Activated CD4-positive, alpha-beta memory T cell treated with anti-CD3 and anti-CD28 coated beads for 36 hours (primary cell): ENCODE measurements at regions of chr3 and their contacts with region 1.

Region 1: GRCh38 chr3:170257145-170257544 is 34.9 kb downstream of the PRKCI start:
- DNase-seq: peak; percentile 64
- H3K4me3 Mint-ChIP-seq: no peak overlapping the region
- H3K27ac Mint-ChIP-seq: peak overlapping the region; percentile 26
- H3K4me1 Mint-ChIP-seq: peaks cover 40% of the 10 kb centered on the region
- H3K27me3 Mint-ChIP-seq: no peaks in the 10 kb centered on the region

Region 2: DNA sequence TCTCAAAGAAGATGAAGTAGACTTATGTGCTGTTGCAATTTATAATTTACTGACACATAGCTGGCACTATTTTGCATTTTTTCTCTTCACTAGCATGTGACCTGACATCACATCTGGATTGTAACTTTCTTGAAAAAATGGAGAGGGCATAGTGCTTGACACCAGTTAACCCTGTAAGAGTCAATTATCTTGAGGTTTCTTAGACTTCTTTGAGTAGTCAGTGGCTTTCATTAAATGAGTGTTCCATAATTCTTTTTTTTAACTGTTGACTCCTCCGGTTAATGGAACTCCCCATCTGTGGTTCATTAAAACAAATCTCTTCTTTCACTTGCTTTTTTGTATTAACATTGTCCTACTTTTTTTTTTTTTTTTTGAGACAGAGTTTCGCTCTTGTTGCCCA is 51.8 kb before region 1 on chr3:
- CTCF ChIA-PET with region 1: interaction called, 3 read pairs
- POLR2A ChIA-PET with region 1: no interaction called
- intact Hi-C with region 1: loop called (anchors 1 kb)
- DNase-seq: no peak
- H3K4me3 Mint-ChIP-seq: no peak overlapping the region
- H3K27ac Mint-ChIP-seq: no peak overlapping the region
- H3K4me1 Mint-ChIP-seq: peaks cover 17% of the 10 kb centered on the region
- H3K27me3 Mint-ChIP-seq: peaks cover 18% of the 10 kb centered on the region

Region 3: DNA sequence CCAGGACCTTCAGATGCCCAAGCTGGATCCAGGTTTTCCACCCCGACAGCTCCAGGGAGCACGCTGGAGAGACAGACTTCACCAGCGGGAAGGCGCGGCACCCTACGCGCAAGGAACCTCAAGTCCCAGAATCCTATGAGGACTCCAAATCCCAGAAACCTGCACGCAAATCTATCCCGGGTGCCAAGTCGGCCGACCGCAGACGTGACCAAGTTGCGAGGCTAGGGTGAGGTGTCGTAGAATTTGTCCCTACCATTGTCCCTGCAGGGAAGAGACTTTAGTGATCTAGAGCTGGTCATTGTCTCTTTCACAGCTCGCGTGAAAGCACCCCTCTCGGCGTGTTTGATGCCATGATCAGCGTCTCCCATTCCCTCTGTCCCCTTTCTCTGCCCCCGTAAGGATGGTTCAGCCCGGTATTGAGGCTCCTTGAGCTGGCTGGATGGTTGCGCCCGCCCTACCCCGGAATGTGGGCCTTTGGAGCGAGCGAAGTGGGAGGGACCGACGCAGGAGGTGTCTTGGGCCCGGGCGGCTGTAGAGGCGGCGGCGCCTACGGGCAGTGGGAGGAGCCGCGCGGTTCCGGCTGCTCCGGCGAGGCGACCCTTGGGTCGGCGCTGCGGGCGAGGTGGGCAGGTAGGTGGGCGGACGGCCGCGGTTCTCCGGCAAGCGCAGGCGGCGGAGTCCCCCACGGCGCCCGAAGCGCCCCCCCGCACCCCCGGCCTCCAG is 35.1 kb before region 1 on chr3 and contains the start of gene PRKCI:
- CTCF ChIA-PET with region 1: no interaction called
- POLR2A ChIA-PET with region 1: no interaction called
- intact Hi-C with region 1: loop called (anchors 1 kb)
- DNase-seq: peak; percentile 95
- H3K4me3 Mint-ChIP-seq: peak within 1 kb of the TSS; percentile 93
- H3K27ac Mint-ChIP-seq: peak within 1 kb of the TSS; percentile 91
- H3K4me1 Mint-ChIP-seq: peaks cover 25% of the 10 kb centered on the region
- H3K27me3 Mint-ChIP-seq: no peaks in the 10 kb centered on the region
- total RNA-seq, gene PRKCI: 27.0 to 27.6 TPM

Region 4: GRCh38 chr3:170277833-170278580 is 20.9 kb after region 1 on chr3:
- CTCF ChIA-PET with region 1: no interaction called
- POLR2A ChIA-PET with region 1: interaction called, 3 read pairs
- intact Hi-C with region 1: loop called (anchors 2 kb)
- DNase-seq: no peak
- H3K4me3 Mint-ChIP-seq: peak overlapping the region; percentile 62
- H3K27ac Mint-ChIP-seq: peak overlapping the region; percentile 53
- H3K4me1 Mint-ChIP-seq: peaks cover 24% of the 10 kb centered on the region
- H3K27me3 Mint-ChIP-seq: no peaks in the 10 kb centered on the region

Region 5: DNA sequence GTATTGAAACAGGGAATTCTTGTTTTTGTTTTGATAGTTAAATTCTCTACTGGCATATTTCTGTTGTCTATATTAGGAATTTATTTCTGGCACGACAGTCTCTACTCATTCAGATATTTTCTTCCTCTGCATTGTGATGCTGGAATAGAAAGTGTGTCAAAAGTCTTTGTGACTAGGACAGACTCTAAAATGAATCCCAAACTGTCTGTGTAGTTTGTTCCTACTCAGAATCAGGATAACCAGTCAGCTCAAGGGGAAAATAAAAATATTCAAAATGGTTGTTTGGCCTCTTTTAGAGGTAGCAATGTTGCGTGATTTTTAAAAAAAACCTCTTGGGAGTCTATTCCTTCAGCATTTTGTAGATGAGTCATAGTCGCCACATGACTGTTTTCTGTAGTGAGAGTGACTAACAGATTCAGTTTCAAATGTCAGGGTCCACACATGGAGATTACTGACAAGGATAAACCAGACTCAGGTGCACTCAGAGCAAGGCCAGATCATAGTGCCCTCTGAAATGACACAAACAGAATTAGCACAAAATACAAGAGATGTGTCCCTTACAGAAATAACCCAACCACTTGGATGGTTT is 315.6 kb after region 1 on chr3:
- CTCF ChIA-PET with region 1: no interaction called
- POLR2A ChIA-PET with region 1: no interaction called
- intact Hi-C with region 1: loop called (anchors 5 kb)
- DNase-seq: peak; percentile 35
- H3K4me3 Mint-ChIP-seq: no peak overlapping the region
- H3K27ac Mint-ChIP-seq: no peak overlapping the region
- H3K4me1 Mint-ChIP-seq: peaks cover 20% of the 10 kb centered on the region
- H3K27me3 Mint-ChIP-seq: peaks cover 21% of the 10 kb centered on the region